ENCODE measurements at regions of chr17 and their contacts with region 1.

Region 1: DNA sequence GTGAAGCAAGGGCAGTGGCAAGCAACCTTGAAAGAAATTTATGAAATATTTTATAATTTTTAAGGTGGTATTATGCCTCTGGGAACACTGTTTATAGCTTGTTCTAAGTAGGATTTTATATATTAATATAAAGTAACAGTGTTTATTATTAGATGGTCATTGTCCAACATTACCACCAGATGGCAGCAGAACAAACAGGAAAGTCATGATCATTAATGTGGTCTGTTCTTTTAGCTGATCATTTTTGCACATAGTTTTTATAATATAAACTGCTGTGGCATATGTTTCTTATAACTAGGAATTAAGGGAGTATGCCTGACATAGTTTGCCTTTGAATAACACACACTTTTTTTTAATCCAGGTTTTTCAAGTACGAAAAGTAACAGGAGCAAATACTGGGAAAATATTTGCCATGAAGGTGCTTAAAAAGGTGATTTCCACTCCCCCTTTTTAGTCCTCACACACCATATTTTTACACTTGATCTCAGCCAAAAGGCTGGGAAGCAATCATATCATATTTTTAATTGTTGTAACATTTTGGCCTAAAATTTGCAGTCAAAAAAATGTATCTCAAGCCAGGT is 21.4 kb downstream of the RPS6KB1 start:
- DNase-seq: peak; percentile 52 to 78
- ATAC-seq: peak; percentile 62 to 81; a peak in 3 of 6 replicates
- H3K4me3 ChIP-seq: no peak overlapping the region
- H3K27ac ChIP-seq: no peak overlapping the region
- H3K4me1 ChIP-seq: peaks cover 3% of the 10 kb centered on the region; the same call in 1 of the 3 replicates
- CTCF ChIP-seq: peak; percentile 88
- EP300 ChIP-seq: no peak
- POLR2A ChIP-seq: no peak
- RAD21 ChIP-seq: peak; percentile 52 to 63

Region 2: GRCh38 chr17:59746849-59747445 is 167.4 kb before region 1 on chr17:
- CTCF ChIA-PET with region 1: interaction called, 17 read pairs
- POLR2A ChIA-PET with region 1: no interaction called
- DNase-seq: peak; percentile 46 to 82
- ATAC-seq: peak; percentile 74 to 87
- H3K4me3 ChIP-seq: no peak overlapping the region
- H3K27ac ChIP-seq: peak overlapping the region; percentile 93 to 95
- H3K4me1 ChIP-seq: peaks cover 44% of the 10 kb centered on the region
- CTCF ChIP-seq: peak; percentile 95
- EP300 ChIP-seq: no peak
- POLR2A ChIP-seq: no peak
- RAD21 ChIP-seq: peak; percentile 89 to 91

Region 3: DNA sequence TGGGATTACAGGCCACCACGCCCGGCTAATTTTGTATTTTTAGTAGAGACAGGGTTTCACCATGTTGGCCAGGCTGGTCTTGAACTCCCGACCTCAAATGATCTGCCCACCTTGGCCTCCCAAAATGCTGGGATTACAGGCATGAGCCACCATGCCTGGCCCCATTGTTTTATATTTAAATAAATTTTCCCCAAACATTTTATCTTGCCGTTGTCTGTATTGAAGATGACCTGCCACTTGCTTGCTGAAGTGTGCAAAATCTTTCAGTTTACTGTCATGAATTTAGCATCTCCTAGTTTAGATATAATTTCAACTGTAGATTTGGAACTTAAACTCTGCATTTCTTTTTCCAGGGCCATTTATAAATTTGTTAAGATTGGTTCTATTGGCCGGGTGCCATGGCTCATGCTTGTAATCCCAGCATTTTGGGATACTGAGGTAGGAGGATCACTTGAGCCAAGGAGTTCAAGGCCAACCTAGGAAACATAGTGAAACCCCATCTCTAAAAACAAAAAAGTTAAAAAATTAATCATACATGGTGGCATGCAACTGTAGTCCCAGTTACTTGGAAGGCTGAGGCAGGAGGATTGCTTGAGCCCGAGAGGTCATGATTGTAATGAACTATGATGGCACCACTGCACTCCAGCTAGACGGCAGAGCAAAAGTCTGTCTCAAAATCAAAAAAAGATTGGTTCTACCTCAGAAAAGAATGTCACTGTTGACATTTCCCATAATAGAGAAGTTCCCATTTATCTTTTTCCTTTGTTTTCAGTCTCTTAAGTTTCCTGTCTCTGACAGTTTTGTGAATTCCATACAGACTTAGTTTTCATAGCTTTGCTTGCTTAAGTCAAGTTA is 122.5 kb before region 1 on chr17:
- CTCF ChIA-PET with region 1: no interaction called
- POLR2A ChIA-PET with region 1: no interaction called
- DNase-seq: peak in 1 of 2 experiments; percentile 95
- ATAC-seq: peak; percentile 62 to 86; a peak in 4 of 6 replicates
- H3K4me3 ChIP-seq: no peak overlapping the region
- H3K27ac ChIP-seq: peak overlapping the region; percentile 94 to 98
- H3K4me1 ChIP-seq: peaks cover 67% of the 10 kb centered on the region
- CTCF ChIP-seq: no peak
- EP300 ChIP-seq: peak; percentile 83 to 89; a peak in 4 of 5 replicates
- POLR2A ChIP-seq: no peak
- RAD21 ChIP-seq: 0 out of 5 replicates have a peak, but pooled peaks have one; percentile 26 to 29

Region 4: GRCh38 chr17:59829217-59830006 is 85.0 kb before region 1 on chr17:
- CTCF ChIA-PET with region 1: no interaction called
- POLR2A ChIA-PET with region 1: no interaction called
- DNase-seq: peak; percentile 82 to 100
- ATAC-seq: peak; percentile 89 to 94
- H3K4me3 ChIP-seq: peak overlapping the region; percentile 22; the same call in 1 of the 3 replicates
- H3K27ac ChIP-seq: peak overlapping the region; percentile 96 to 97
- H3K4me1 ChIP-seq: peaks cover 87% of the 10 kb centered on the region
- CTCF ChIP-seq: no peak
- EP300 ChIP-seq: peak; percentile 99; a peak in 4 of 5 replicates
- POLR2A ChIP-seq: no peak
- RAD21 ChIP-seq: peak; percentile 24 to 46; a peak in 3 of 5 replicates

Region 5: GRCh38 chr17:59892924-59893676 is 21.3 kb before region 1 on chr17 and contains the starts of genes RPS6KB1 and TUBD1:
- CTCF ChIA-PET with region 1: interaction called, 33 read pairs
- POLR2A ChIA-PET with region 1: no interaction called
- DNase-seq: peak; percentile 99 to 100
- ATAC-seq: peak; percentile 96 to 97
- H3K4me3 ChIP-seq: peak within 1 kb of the TSS; percentile 81
- H3K27ac ChIP-seq: peak within 1 kb of the TSS; percentile 93
- H3K4me1 ChIP-seq: peaks cover 39% of the 10 kb centered on the region
- CTCF ChIP-seq: no peak
- EP300 ChIP-seq: no peak
- POLR2A ChIP-seq: peak; percentile 97
- RAD21 ChIP-seq: no peak
- polyA plus RNA-seq, gene RPS6KB1: 53.7 and 57.3 TPM in 2 replicates
- polyA plus RNA-seq, gene TUBD1: 24.4 and 28.3 TPM in 2 replicates

Region 6: GRCh38 chr17:59899103-59899502 is 15.3 kb before region 1 on chr17:
- CTCF ChIA-PET with region 1: interaction called, 51 read pairs
- POLR2A ChIA-PET with region 1: no interaction called
- DNase-seq: peak in 1 of 2 experiments; percentile 55
- ATAC-seq: peak; percentile 71 to 82
- H3K4me3 ChIP-seq: no peak overlapping the region
- H3K27ac ChIP-seq: no peak overlapping the region
- H3K4me1 ChIP-seq: peaks cover 30% of the 10 kb centered on the region
- CTCF ChIP-seq: no peak
- EP300 ChIP-seq: no peak
- POLR2A ChIP-seq: no peak
- RAD21 ChIP-seq: no peak

Region 7: DNA sequence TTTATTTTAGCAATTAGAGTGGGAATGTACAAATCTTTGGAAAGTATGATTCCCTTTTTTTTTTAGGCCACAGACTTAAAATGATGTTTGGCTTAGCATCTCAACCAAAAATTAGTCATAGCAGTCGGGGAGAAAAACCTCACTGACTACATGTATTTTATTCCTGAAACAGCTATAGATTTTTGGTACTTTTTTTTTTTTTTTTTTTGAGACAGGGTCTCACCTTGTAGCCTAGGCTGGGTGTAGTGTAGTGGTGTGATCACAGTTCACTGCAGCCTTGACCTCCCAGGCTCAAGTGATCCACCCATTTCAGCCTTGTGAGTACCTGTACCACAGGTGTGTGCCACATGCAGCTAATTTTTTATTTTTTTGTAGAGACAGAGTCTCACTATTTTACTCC is 26.8 kb after region 1 on chr17:
- CTCF ChIA-PET with region 1: interaction called, 12 read pairs
- POLR2A ChIA-PET with region 1: no interaction called
- DNase-seq: no peak
- ATAC-seq: no peak
- H3K4me3 ChIP-seq: no peak overlapping the region
- H3K27ac ChIP-seq: no peak overlapping the region
- H3K4me1 ChIP-seq: no peaks in the 10 kb centered on the region
- CTCF ChIP-seq: no peak
- EP300 ChIP-seq: no peak
- POLR2A ChIP-seq: no peak
- RAD21 ChIP-seq: no peak

Region 8: DNA sequence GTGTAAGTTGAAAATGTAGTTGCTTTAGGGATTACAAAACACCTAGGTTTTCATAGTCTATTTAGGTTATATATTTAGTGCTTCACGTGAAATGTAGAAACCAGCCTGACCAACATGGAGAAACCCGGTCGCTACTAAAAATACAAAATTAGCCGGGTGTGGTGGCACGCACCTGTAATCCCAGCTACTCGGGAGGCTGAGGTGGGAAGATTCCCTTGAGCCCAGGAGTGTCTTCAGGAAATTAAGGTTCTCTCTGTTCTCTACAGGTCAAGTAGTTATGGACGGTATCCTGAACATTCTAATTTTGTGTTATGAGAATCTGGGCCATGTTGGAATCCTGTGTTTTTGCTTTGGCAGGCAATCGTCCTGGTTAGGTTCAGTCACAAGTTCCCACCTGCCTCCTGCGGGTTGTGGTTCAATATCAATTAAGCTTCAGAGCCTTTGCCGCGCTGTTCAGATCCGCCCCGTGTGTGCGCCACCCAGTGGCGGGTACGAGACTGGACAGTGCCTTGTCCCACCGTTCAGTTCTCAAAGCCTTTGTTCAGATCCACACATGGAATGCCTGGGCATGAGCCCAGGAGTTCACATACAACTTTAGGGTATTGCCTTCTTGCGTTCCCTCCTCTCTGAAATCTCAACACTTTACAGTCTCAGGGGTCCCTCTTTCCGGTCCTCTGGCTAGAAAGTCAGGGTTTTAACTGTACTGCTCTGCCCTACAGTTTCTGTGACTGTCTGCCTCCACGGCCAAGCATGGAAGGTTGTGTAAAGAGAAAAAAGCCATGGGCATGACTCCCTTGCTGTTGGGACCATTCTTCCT is 122.6 kb after region 1 on chr17:
- CTCF ChIA-PET with region 1: interaction called, 28 read pairs
- POLR2A ChIA-PET with region 1: no interaction called
- DNase-seq: peak; percentile 81 to 84
- ATAC-seq: peak; percentile 87 to 94
- H3K4me3 ChIP-seq: no peak overlapping the region
- H3K27ac ChIP-seq: peak overlapping the region; percentile 11 to 59; a peak in 5 of 6 replicates
- H3K4me1 ChIP-seq: peaks cover 5% of the 10 kb centered on the region
- CTCF ChIP-seq: peak; percentile 96
- EP300 ChIP-seq: no peak
- POLR2A ChIP-seq: no peak
- RAD21 ChIP-seq: peak; percentile 66 to 69

Region 9: GRCh38 chr17:60169921-60170742 is 255.8 kb after region 1 on chr17:
- CTCF ChIA-PET with region 1: no interaction called
- POLR2A ChIA-PET with region 1: no interaction called
- DNase-seq: no peak
- ATAC-seq: no peak
- H3K4me3 ChIP-seq: no peak overlapping the region
- H3K27ac ChIP-seq: peak overlapping the region in 1 of 2 experiments; percentile 25; a peak in 1 of 6 replicates
- H3K4me1 ChIP-seq: peaks cover 33% of the 10 kb centered on the region
- CTCF ChIP-seq: no peak
- EP300 ChIP-seq: no peak
- POLR2A ChIP-seq: no peak
- RAD21 ChIP-seq: no peak